Sigmoid colon (tissue), 7 donors: ENCODE measurements at regions of chr2 and their contacts with region 1.

Region 1: DNA sequence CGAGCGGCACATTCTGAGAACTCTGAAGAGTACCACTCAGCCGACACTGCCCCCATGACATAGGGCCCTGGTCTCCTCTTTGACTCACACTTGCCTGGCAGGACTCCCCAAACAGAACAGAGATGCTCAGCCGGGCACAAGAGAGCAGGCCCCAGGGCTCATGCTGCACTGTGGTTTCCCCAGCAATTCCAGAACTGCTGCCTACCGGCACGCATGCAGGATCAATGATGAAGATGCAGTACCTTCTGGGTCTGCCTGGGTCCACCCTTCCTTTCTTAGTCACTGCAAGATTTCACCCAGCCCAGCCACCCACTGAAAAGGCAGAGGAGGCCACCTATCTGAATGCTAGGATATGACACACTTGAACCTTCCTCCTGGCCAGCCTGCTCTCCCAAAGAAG is 49.4 kb downstream of the BCL11A start:
- DNase-seq: no peak
- H3K4me3 ChIP-seq: no peak overlapping the region
- H3K27ac ChIP-seq: peak overlapping the region in 3 of 4 donors; percentile 29 to 78 (median 67)
- H3K4me1 ChIP-seq: peaks cover 0 to 92% (median 56%) of the 10 kb centered on the region in 4 donors
- H3K27me3 ChIP-seq: no peaks in the 10 kb centered on the region
- CTCF ChIP-seq: no peak
- EP300 ChIP-seq: no peak
- POLR2A ChIP-seq: no peak

Region 2: DNA sequence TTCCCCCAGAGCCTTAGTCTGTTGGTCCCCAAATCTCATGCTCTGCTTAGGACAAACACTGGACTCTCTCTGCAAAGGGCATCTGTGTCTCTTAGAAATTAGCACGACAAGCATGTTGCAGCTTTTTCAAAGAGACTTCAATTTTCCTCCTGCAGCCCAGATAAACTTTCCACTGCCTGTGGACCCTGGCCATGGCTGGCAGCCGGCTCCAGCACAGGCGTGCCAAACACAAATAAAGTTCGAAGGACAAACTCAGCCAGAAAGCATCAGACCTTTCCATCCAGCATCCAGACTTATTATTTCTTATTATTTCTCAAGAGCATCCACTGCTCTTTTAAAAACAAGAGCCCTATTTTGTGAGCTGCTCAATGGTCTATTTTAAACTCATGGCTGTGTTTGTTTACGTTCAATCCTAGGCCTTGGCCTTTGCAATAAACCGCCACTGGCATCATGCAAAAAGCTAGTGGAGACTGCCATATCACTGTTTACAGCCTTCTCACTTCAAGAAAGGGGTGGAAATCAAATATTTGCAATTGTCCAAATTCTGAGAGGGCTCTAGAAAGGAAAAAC is 251.4 kb before region 1 on chr2:
- intact Hi-C with region 1: no loop called
- DNase-seq: no peak
- H3K4me3 ChIP-seq: no peak overlapping the region
- H3K27ac ChIP-seq: no peak overlapping the region
- H3K4me1 ChIP-seq: peaks cover 0 to 12% (median 9%) of the 10 kb centered on the region in 4 donors
- H3K27me3 ChIP-seq: no peaks in the 10 kb centered on the region
- CTCF ChIP-seq: no peak
- EP300 ChIP-seq: no peak
- POLR2A ChIP-seq: no peak

Region 3: DNA sequence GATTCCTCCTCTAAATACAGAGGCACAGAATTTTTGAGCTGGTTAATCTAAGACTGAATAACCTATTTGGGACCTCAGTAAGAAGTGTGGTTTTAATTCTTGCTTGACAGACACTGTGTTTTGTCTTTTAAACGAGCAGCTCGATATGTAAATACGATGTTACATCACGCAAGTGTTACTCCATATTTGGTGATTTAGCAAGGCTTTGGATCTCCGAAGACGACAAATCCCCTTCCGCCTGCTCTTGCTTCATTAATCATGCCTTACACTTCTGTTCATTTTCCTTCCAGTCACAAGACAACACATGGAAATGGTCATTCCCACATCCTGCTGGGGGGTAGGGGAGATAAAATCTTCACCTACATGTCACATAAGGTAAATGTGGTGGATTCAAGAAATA is 40.0 kb after region 1 on chr2:
- intact Hi-C with region 1: loop called (anchors 5 kb)
- DNase-seq: peak; percentile 78
- H3K4me3 ChIP-seq: peak overlapping the region in 2 of 4 donors; percentile 1 to 15
- H3K27ac ChIP-seq: peak overlapping the region; percentile 56 to 95 (median 87)
- H3K4me1 ChIP-seq: peaks cover 0 to 92% (median 73%) of the 10 kb centered on the region in 4 donors
- H3K27me3 ChIP-seq: peaks cover 0 to 6% (median 0%) of the 10 kb centered on the region in 3 donors
- CTCF ChIP-seq: no peak
- EP300 ChIP-seq: peak; percentile 96 to 98 (median 97)
- POLR2A ChIP-seq: no peak

Region 4: DNA sequence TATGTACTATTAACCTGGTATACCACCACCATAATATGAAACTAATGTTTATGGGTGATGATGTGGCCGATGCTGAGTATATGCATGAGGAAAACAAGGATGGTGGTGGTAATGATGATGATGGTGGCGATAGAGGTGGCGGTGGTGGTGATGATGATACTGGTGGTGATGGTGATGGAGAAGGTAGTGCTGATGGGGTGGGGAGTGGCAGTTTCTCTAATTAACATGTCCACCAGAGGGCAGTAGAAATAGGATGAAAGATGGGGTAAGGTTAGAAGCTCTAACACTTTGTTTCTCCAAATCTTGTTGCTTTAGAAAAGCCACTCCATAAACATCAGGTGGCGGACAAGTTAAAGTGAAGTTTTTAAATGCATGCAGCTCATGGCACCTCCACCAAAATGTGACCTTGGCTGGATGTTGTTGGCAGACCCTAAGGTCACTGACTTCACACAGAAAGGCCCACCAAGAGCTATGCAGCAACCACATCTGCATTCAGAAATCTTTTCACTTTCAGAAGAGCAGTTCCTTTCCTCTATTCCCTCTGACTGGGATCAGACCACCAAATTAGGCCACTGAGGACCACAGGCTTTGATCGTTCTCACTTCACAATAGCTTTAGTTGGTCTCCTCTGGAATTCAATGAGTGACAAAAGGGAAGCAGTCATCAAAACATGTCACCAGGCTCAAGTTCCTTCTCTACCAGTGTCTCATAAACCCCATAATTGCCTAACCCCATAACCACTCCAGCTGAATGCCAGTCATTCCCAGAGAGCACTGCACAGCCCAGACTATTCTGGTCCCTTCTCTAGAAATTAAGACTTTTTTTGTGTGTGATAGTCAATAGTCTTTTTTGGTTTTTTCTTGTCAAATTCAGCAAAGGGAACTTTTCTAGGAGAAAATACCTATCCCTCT is 56.9 kb after region 1 on chr2:
- intact Hi-C with region 1: no loop called
- DNase-seq: no peak
- H3K4me3 ChIP-seq: no peak overlapping the region
- H3K27ac ChIP-seq: no peak overlapping the region
- H3K4me1 ChIP-seq: peaks cover 0 to 15% (median 9%) of the 10 kb centered on the region in 4 donors
- H3K27me3 ChIP-seq: peaks cover 0 to 11% (median 0%) of the 10 kb centered on the region in 3 donors
- CTCF ChIP-seq: peak in 3 of 4 experiments; percentile 23 to 53 (median 35)
- EP300 ChIP-seq: no peak
- POLR2A ChIP-seq: no peak